ENCODE measurements at regions of chr18 and their contacts with region 1.

Region 1: DNA sequence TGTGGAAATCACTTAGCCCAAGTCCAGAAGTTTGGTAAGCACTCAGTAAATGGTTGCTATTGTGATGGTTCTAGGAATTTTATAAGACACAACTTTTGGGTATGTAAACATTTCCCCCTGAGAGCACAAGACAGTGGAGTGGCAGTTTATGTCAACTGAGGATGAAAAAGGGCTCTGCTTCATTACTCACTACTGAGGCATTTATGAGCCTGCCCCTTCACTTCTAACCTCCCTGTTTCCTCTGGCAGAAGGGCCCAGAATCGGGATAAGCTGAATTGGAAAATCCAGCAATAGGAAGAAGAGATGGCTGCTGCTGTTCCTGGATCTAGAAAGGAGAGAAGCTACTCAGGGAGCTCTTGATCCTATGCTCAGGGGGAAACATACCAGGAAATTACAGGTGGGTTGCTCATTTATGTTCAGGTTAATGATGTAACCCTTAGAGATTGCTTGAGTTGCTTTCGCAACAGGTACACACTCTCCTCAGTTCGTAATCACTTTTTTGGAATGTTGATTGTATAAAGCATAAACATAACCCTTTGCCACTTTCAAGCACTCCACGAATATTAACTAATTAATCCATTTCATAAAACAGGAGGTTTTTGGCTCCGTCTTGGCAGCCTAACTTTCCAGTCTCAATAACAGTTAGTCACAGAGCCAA is 46.3 kb downstream of the ADCYAP1 start:
- DNase-seq: no peak
- H3K4me3 ChIP-seq: no peak overlapping the region
- H3K27ac ChIP-seq: no peak overlapping the region
- H3K4me1 ChIP-seq: no peaks in the 10 kb centered on the region
- H3K27me3 ChIP-seq: no peaks in the 10 kb centered on the region
- CTCF ChIP-seq: no peak
- EP300 ChIP-seq: no peak
- RAD21 ChIP-seq: no peak

Region 2: DNA sequence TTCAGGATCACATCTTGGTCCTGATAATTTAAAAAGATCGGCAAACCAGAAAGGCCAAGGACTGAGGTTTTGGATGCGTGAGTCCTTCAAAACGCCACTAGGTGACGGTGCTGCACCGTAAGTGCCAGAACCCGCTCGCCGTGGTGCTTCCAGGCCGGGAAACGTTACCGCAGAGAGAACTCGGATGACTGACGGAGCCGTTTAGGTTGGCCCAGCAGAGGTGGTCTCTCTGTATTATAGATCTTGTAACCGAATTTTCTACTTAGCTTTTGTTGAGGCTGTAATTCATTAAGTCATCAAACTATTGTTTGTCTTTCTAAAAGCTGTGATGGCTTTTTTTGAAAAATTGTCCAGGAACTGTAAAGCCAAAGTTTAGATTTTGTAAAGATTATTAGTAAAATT is 86.1 kb before region 1 on chr18:
- CTCF ChIA-PET with region 1: interaction called, 15 read pairs
- POLR2A ChIA-PET with region 1: no interaction called
- DNase-seq: peak; percentile 60
- H3K4me3 ChIP-seq: peak overlapping the region in 1 of 2 experiments; percentile 39; a peak in 1 of 4 replicates
- H3K27ac ChIP-seq: no peak overlapping the region
- H3K4me1 ChIP-seq: no peaks in the 10 kb centered on the region
- H3K27me3 ChIP-seq: peaks cover 38% of the 10 kb centered on the region; the same call in 1 of the 2 replicates
- CTCF ChIP-seq: peak; percentile 97
- EP300 ChIP-seq: no peak
- RAD21 ChIP-seq: peak; percentile 95

Region 3: GRCh38 chr18:1488956-1489355 is 537.9 kb after region 1 on chr18:
- CTCF ChIA-PET with region 1: no interaction called
- POLR2A ChIA-PET with region 1: no interaction called
- DNase-seq: no peak
- H3K4me3 ChIP-seq: no peak overlapping the region
- H3K27ac ChIP-seq: no peak overlapping the region
- H3K4me1 ChIP-seq: no peaks in the 10 kb centered on the region
- H3K27me3 ChIP-seq: no peaks in the 10 kb centered on the region
- CTCF ChIP-seq: no peak
- EP300 ChIP-seq: no peak
- RAD21 ChIP-seq: no peak

Measured in SK-N-SH (cell line).